ENCODE measurements at regions of chr20 and their contacts with region 1.

Region 1: GRCh38 chr20:38057351-38057972 is 23.9 kb downstream of the RPRD1B start:
- DNase-seq: peak; percentile 86
- ATAC-seq: peak; percentile 96
- H3K4me3 ChIP-seq: no peak overlapping the region
- H3K4me3 Mint-ChIP-seq: no peak overlapping the region
- H3K27ac ChIP-seq: no peak overlapping the region
- H3K27ac Mint-ChIP-seq: peak overlapping the region; percentile 59
- H3K4me1 ChIP-seq: peaks cover 0 to 3% of the 10 kb centered on the region in 2 donors
- H3K4me1 Mint-ChIP-seq: peaks cover 13% of the 10 kb centered on the region
- H3K27me3 ChIP-seq: no peaks in the 10 kb centered on the region
- H3K27me3 Mint-ChIP-seq: no peaks in the 10 kb centered on the region
- CTCF ChIP-seq: peak; percentile 98

Region 2: GRCh38 chr20:38033310-38034107 is 24.0 kb before region 1 on chr20 and contains the starts of genes RPRD1B and TTI1:
- CTCF ChIA-PET with region 1: interaction called, 10 read pairs
- POLR2A ChIA-PET with region 1: no interaction called
- intact Hi-C with region 1: no loop called
- DNase-seq: peak; percentile 95
- ATAC-seq: peak; percentile 89
- H3K4me3 ChIP-seq: peak within 1 kb of the TSS; percentile 84 to 98 (median 87)
- H3K4me3 Mint-ChIP-seq: peak within 1 kb of the TSS; percentile 95
- H3K27ac ChIP-seq: peak within 1 kb of the TSS; percentile 87 to 90
- H3K27ac Mint-ChIP-seq: peak within 1 kb of the TSS; percentile 92
- H3K4me1 ChIP-seq: peaks cover 35 to 46% of the 10 kb centered on the region in 2 donors
- H3K4me1 Mint-ChIP-seq: peaks cover 74% of the 10 kb centered on the region
- H3K27me3 ChIP-seq: no peaks in the 10 kb centered on the region
- H3K27me3 Mint-ChIP-seq: no peaks in the 10 kb centered on the region
- CTCF ChIP-seq: no peak
- total RNA-seq, gene RPRD1B: 54.9 and 55.9 TPM in 2 replicates
- total RNA-seq, gene TTI1: 33.9 and 34.5 TPM in 2 replicates

Region 3: GRCh38 chr20:38073307-38074071 is 16.0 kb after region 1 on chr20:
- CTCF ChIA-PET with region 1: interaction called, 82 read pairs
- POLR2A ChIA-PET with region 1: interaction called, 3 read pairs
- intact Hi-C with region 1: loop called (anchors 2 kb)
- DNase-seq: peak; percentile 75
- ATAC-seq: peak; percentile 53
- H3K4me3 ChIP-seq: no peak overlapping the region
- H3K4me3 Mint-ChIP-seq: no peak overlapping the region
- H3K27ac ChIP-seq: peak overlapping the region in 1 of 2 donors; percentile 5
- H3K27ac Mint-ChIP-seq: peak overlapping the region; percentile 68
- H3K4me1 ChIP-seq: peaks cover 27 to 41% of the 10 kb centered on the region in 2 donors
- H3K4me1 Mint-ChIP-seq: peaks cover 53% of the 10 kb centered on the region
- H3K27me3 ChIP-seq: no peaks in the 10 kb centered on the region
- H3K27me3 Mint-ChIP-seq: no peaks in the 10 kb centered on the region
- CTCF ChIP-seq: peak; percentile 81

Region 4: DNA sequence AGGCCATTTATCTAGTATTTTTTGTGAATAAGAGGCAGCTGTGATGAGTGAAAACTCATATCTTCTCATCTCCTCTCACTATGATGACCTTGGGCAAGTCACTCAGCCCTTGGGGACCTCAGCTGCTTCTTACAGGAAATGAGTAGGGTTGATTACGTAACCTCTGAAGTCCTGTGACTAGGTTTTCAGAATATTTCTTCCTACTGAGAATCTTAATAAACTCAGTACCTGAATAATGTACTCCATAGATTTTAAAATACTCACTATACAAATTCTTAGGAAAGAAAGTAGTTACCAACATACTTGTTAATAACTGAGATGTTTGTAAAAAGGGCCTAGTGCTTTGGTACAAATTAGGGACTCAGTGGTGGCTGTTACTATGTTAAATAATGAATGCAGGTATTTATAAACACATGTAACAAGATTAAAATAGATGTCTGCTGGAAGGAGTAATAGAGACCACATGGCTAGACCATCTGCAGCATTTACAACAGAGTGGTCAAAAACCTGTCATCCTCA is 37.0 kb after region 1 on chr20:
- CTCF ChIA-PET with region 1: interaction called, 16 read pairs
- POLR2A ChIA-PET with region 1: no interaction called
- intact Hi-C with region 1: loop called (anchors 1 kb)
- DNase-seq: peak; percentile 86
- ATAC-seq: peak; percentile 68
- H3K4me3 ChIP-seq: peak overlapping the region in 1 of 5 experiments; percentile 21
- H3K4me3 Mint-ChIP-seq: peak overlapping the region; percentile 77
- H3K27ac ChIP-seq: peak overlapping the region; percentile 95 to 96
- H3K27ac Mint-ChIP-seq: peak overlapping the region; percentile 98
- H3K4me1 ChIP-seq: peaks cover 53 to 60% of the 10 kb centered on the region in 2 donors
- H3K4me1 Mint-ChIP-seq: peaks cover 72% of the 10 kb centered on the region
- H3K27me3 ChIP-seq: no peaks in the 10 kb centered on the region
- H3K27me3 Mint-ChIP-seq: no peaks in the 10 kb centered on the region
- CTCF ChIP-seq: no peak

Region 5: DNA sequence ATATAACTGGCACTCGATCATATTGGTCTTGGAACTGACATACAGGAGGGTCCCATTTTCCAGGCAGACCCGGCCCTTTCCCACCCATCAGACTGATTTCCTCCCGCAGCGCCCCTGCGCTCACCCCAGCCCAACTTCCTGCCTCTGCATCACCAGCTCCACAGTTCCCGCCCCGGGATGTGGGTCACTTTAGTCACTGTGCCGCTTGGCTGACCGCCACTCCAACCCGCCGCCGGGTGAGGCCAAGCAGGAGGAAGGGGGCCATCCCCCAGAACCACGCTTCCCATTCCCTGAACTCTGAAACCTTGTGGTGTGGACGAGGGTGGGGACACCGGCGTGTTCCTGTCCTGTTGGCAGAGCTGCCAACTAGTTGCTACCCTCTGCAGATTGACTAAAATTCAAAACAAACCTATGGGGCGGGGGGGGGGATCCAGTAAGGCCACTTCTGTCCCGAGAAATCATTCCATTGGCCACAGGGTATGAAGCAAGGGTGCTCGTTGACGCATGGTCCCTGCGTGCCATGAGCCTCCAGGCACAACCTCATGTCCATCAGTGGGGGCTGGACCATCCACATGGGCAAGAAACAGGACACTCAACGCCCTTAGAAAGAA is 95.3 kb after region 1 on chr20:
- CTCF ChIA-PET with region 1: interaction called, 12 read pairs
- POLR2A ChIA-PET with region 1: no interaction called
- intact Hi-C with region 1: no loop called
- DNase-seq: peak; percentile 39
- ATAC-seq: peak; percentile 43
- H3K4me3 ChIP-seq: peak overlapping the region in 3 of 5 experiments; percentile 1 to 28 (median 4)
- H3K4me3 Mint-ChIP-seq: peak overlapping the region; percentile 79
- H3K27ac ChIP-seq: no peak overlapping the region
- H3K27ac Mint-ChIP-seq: peak overlapping the region; percentile 59
- H3K4me1 ChIP-seq: peaks cover 12 to 28% of the 10 kb centered on the region in 2 donors
- H3K4me1 Mint-ChIP-seq: peaks cover 26% of the 10 kb centered on the region
- H3K27me3 ChIP-seq: no peaks in the 10 kb centered on the region
- H3K27me3 Mint-ChIP-seq: no peaks in the 10 kb centered on the region
- CTCF ChIP-seq: no peak

Region 6: DNA sequence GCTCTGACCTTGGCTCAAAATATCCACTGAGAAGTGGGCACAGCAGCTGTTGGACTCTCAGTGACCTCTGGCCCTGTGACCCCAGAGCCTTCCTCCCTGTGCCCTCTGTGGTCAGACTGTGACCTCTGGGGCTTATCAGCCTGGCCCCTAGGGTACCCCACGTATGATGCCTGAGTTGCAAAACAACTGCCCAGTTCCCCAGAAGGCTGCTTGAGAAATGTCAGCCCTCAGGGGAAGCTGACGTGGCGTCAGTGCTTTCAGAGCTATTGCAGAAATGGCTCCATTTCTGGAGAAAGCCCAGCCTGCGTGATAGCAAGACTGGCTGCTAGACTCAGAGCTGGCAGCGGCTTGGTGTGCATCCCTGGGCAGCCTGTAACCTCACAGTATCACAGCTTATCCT is 139.1 kb after region 1 on chr20:
- CTCF ChIA-PET with region 1: interaction called, 20 read pairs
- POLR2A ChIA-PET with region 1: no interaction called
- intact Hi-C with region 1: no loop called
- DNase-seq: no peak
- ATAC-seq: peak; percentile 85
- H3K4me3 ChIP-seq: no peak overlapping the region
- H3K4me3 Mint-ChIP-seq: peak overlapping the region; percentile 9
- H3K27ac ChIP-seq: no peak overlapping the region
- H3K27ac Mint-ChIP-seq: peak overlapping the region; percentile 0
- H3K4me1 ChIP-seq: peaks cover 0 to 3% of the 10 kb centered on the region in 2 donors
- H3K4me1 Mint-ChIP-seq: peaks cover 26% of the 10 kb centered on the region
- H3K27me3 ChIP-seq: peaks cover 0 to 10% (median 3%) of the 10 kb centered on the region in 4 experiments
- H3K27me3 Mint-ChIP-seq: peaks cover 12% of the 10 kb centered on the region
- CTCF ChIP-seq: no peak

Region 7: GRCh38 chr20:38290832-38291581 is 233.5 kb after region 1 on chr20:
- CTCF ChIA-PET with region 1: no interaction called
- POLR2A ChIA-PET with region 1: no interaction called
- intact Hi-C with region 1: no loop called
- DNase-seq: no peak
- ATAC-seq: no peak
- H3K4me3 ChIP-seq: no peak overlapping the region
- H3K4me3 Mint-ChIP-seq: no peak overlapping the region
- H3K27ac ChIP-seq: no peak overlapping the region
- H3K27ac Mint-ChIP-seq: no peak overlapping the region
- H3K4me1 ChIP-seq: no peaks in the 10 kb centered on the region
- H3K4me1 Mint-ChIP-seq: no peaks in the 10 kb centered on the region
- H3K27me3 ChIP-seq: peaks cover 0 to 16% (median 4%) of the 10 kb centered on the region in 4 experiments
- H3K27me3 Mint-ChIP-seq: peaks cover 55% of the 10 kb centered on the region
- CTCF ChIP-seq: no peak

Measured in B cell (primary cell).